Activated naive CD8-positive, alpha-beta T cell treated with anti-CD3 and anti-CD28 coated beads, Interleukin-2, amount 10 ng/mL, durations not matched to agents 7 days and 5 days (primary cell): ENCODE measurements at regions of chr15 and their contacts with region 1.

Region 1: DNA sequence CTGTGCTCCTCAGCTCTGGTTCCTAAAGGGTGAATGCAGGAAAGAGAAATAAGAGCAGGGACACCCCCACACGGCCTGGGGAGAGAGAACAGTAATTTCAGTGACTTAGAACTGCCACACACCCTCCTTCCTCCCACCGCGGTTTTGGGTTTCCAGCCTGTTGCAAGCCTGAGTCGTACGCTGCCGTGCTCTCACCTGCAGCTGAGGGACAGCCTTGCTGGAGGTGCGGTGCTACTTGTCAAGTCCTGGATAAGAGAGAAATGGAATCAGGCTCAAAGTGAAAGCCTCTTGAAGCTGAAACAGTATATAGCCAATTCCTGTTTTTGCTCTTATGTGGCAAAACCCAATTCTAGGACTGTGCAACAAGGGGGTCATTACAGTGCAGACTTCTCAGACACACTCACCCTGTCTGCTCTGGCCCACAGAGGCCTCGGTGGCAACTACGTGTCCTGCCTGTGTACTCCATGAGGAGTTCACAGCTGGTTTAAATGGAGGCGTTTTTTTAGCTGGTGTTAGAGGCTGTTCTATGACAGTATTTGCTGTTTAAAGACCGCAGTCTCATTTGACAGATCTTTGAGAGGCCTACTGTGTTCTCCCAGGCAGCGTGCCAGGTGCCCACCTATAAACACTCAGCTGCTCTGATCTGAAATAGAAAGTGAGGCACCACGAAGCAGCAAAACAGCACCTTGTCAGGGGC is 42.9 kb downstream of the TBC1D2B start:
- DNase-seq: peak; percentile 77
- ATAC-seq: peak; percentile 89
- H3K4me3 Mint-ChIP-seq: peak overlapping the region; percentile 69
- H3K27ac Mint-ChIP-seq: peak overlapping the region; percentile 71
- H3K4me1 Mint-ChIP-seq: peaks cover 68% of the 10 kb centered on the region
- H3K27me3 Mint-ChIP-seq: no peaks in the 10 kb centered on the region

Region 2: DNA sequence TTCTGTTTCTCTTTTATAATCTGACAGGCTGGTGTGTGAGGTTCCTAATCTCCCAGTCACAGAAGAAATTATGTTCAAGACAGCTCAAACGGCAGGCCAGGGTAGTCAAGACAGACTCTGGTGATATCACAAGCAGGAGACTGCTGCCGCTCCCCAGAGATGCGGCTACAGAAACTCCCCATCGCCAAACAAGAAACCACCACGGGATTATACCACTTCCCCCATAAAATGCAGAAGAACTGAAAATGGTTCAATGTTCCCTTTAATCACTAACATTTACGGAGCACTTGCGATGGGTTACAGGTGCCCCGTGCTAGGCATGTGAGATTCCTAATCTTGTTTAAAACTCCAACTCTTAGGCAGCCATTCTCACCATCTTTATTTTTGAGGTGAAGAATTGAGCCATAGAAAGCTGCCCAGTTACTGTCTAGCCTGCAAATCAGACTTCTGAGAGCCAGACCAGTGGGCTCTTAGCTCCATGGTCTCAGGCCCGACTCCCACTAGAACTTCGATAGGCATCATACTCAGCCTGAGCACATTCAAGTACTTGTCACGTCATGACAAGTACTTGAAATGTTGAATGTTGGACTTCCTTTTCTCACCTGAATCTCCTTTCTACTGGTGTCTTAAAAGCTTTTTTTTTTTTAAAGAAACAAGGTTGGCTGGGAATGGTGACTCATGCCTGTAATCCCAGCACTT is 15.5 kb before region 1 on chr15:
- POLR2A ChIA-PET with region 1: interaction called, 13 read pairs
- DNase-seq: no peak
- ATAC-seq: peak; percentile 95
- H3K4me3 Mint-ChIP-seq: peak overlapping the region; percentile 62
- H3K27ac Mint-ChIP-seq: peak overlapping the region; percentile 72
- H3K4me1 Mint-ChIP-seq: peaks cover 29% of the 10 kb centered on the region
- H3K27me3 Mint-ChIP-seq: no peaks in the 10 kb centered on the region

Region 3: DNA sequence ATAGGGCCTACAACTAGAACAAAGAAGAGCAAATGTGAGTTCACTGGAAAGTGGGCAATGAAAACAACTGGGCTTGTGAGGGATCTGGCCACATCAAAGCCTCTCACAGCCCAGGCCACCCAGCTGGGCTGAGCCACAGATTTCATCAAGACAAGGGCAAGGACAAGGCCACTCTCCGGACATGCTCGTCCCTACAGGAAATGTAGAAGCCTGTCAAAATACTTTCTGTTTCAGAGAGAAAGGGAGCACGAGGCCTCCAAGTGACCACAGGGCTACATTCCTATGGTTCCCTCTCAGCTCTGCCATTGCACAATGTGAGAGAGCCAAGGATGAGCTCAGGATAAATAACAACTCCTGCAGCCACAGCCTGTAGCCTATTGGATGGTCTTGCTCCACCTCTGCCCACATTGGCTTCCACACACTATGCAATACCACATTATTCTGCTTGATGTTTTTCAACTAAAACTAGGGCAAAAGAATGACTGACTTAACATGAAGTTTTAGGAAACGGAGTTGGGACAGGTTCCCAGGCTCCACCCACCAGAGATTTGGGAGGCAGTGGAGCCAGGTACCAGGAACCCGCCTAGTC is 30.7 kb after region 1 on chr15:
- POLR2A ChIA-PET with region 1: interaction called, 13 read pairs
- DNase-seq: no peak
- ATAC-seq: no peak
- H3K4me3 Mint-ChIP-seq: no peak overlapping the region
- H3K27ac Mint-ChIP-seq: no peak overlapping the region
- H3K4me1 Mint-ChIP-seq: peaks cover 51% of the 10 kb centered on the region
- H3K27me3 Mint-ChIP-seq: no peaks in the 10 kb centered on the region

Region 4: DNA sequence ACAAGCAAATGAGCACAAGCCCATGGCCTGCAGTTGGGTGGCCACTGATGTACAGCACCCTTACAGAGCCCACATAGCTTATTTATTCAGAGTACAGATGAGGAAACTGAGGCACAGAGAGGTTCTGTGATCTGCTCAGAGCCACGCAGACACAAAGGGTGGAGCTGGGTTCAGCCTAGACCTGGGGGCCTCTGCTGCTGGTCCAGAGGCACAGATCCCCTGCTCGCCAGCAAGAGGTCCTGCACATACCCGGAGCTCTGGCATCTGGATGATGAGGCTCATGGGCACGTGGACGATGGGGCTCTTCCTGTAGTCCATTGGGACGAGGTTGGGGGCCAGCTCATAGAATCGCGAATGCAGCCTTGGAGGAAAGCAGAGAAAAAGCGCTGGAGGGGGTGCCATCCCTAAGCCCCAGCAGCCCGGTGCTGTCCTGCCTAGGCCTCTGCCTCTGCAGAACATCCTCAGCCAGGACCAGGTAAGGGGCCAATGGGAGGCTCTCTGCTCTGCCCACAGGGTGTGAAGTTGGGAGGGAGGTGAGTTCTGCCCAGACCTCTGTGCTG is 76.4 kb after region 1 on chr15:
- POLR2A ChIA-PET with region 1: no interaction called
- DNase-seq: no peak
- ATAC-seq: no peak
- H3K4me3 Mint-ChIP-seq: no peak overlapping the region
- H3K27ac Mint-ChIP-seq: no peak overlapping the region
- H3K4me1 Mint-ChIP-seq: peaks cover 24% of the 10 kb centered on the region
- H3K27me3 Mint-ChIP-seq: no peaks in the 10 kb centered on the region